ENCODE measurements at regions of chr6 and their contacts with region 1.

Region 1: GRCh38 chr6:391559-392440 is at the start of gene IRF4:
- DNase-seq: peak; percentile 84
- H3K4me3 ChIP-seq: peak within 1 kb of the TSS; percentile 98
- H3K27ac ChIP-seq: peak within 1 kb of the TSS; percentile 57
- H3K4me1 ChIP-seq: peaks cover 49% of the 10 kb centered on the region
- CTCF ChIP-seq: no peak
- total RNA-seq, gene IRF4: 143 and 189 TPM in 2 replicates

Region 2: GRCh38 chr6:291697-292505 is 99.9 kb before region 1 on chr6 and contains the start of gene DUSP22:
- CTCF ChIA-PET with region 1: no interaction called
- POLR2A ChIA-PET with region 1: interaction called, 13 read pairs
- intact Hi-C with region 1: loop called (anchors 1 kb)
- DNase-seq: peak; percentile 87
- H3K4me3 ChIP-seq: peak within 1 kb of the TSS; percentile 80
- H3K27ac ChIP-seq: peak within 1 kb of the TSS; percentile 88
- H3K4me1 ChIP-seq: peaks cover 65% of the 10 kb centered on the region
- CTCF ChIP-seq: no peak
- total RNA-seq, gene DUSP22: 133 and 149 TPM in 2 replicates

Region 3: GRCh38 chr6:328136-328670 is 63.6 kb before region 1 on chr6:
- CTCF ChIA-PET with region 1: interaction called, 4 read pairs
- POLR2A ChIA-PET with region 1: interaction called, 27 read pairs
- intact Hi-C with region 1: loop called (anchors 2 kb)
- DNase-seq: peak; percentile 90
- H3K4me3 ChIP-seq: peak overlapping the region; percentile 58
- H3K27ac ChIP-seq: peak overlapping the region; percentile 98
- H3K4me1 ChIP-seq: peaks cover 98% of the 10 kb centered on the region
- CTCF ChIP-seq: no peak

Region 4: GRCh38 chr6:356828-357251 is 35.0 kb before region 1 on chr6:
- CTCF ChIA-PET with region 1: interaction called, 9 read pairs
- POLR2A ChIA-PET with region 1: interaction called, 47 read pairs
- intact Hi-C with region 1: loop called (anchors 5 kb)
- DNase-seq: peak; percentile 83
- H3K4me3 ChIP-seq: peak overlapping the region; percentile 10
- H3K27ac ChIP-seq: peak overlapping the region; percentile 86
- H3K4me1 ChIP-seq: peaks cover 100% of the 10 kb centered on the region
- CTCF ChIP-seq: no peak

Region 5: GRCh38 chr6:373751-374724 is 17.8 kb before region 1 on chr6:
- CTCF ChIA-PET with region 1: interaction called, 5 read pairs
- POLR2A ChIA-PET with region 1: interaction called, 32 read pairs
- intact Hi-C with region 1: no loop called
- DNase-seq: no peak
- H3K4me3 ChIP-seq: no peak overlapping the region
- H3K27ac ChIP-seq: no peak overlapping the region
- H3K4me1 ChIP-seq: peaks cover 49% of the 10 kb centered on the region
- CTCF ChIP-seq: no peak

Region 6: GRCh38 chr6:710601-711571 is 319.1 kb after region 1 on chr6:
- CTCF ChIA-PET with region 1: no interaction called
- POLR2A ChIA-PET with region 1: interaction called, 6 read pairs
- intact Hi-C with region 1: loop called (anchors 10 kb)
- DNase-seq: peak; percentile 79
- H3K4me3 ChIP-seq: peak overlapping the region; percentile 67
- H3K27ac ChIP-seq: peak overlapping the region; percentile 82
- H3K4me1 ChIP-seq: peaks cover 36% of the 10 kb centered on the region
- CTCF ChIP-seq: no peak

Measured in OCI-LY7 (cell line).